ENCODE measurements at regions of chr1 and their contacts with region 1.

Region 1: DNA sequence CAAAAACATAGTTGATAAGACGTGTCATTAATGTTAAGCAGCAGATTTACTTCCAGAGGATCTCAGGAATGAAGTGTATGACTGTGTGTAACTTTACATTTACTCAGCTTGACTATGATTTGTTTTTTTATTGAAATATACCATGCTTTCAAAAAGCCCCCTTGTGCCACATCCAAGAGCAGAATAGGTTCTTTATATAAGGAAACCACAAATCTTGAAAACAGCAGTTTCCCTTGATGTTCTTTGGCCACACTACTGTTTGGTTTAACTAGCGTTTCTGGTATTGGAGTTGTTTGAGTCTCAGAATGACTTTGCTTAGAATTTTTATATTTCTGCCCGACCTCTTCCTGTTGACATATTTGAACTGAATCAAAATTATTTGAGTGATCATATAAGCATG is 25.0 kb downstream of the LRRC8C start:
- DNase-seq: no peak
- ATAC-seq: peak; percentile 34
- H3K4me3 Mint-ChIP-seq: no peak overlapping the region
- H3K27ac Mint-ChIP-seq: peak overlapping the region; percentile 27
- H3K4me1 Mint-ChIP-seq: peaks cover 54% of the 10 kb centered on the region
- H3K27me3 Mint-ChIP-seq: no peaks in the 10 kb centered on the region
- CTCF ChIP-seq: no peak

Region 2: DNA sequence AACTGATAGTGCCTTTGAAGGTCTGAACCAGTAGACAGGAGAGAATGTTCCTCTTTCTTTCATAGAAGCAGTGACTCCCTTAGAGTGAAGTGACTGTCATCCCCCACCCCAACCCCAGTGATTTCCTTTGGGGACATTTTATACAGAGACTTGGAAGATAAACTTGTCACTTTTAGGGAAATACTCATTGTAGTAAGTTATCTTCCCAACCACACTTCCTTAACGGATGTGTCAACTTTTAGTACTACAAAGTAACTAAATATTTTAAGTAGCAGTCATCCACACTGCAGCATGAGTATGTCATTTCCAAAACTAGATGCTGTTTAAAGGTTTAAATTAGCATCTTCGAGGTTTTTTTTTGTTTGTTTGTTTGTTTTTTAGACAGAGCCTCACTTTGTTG is 119.5 kb before region 1 on chr1:
- CTCF ChIA-PET with region 1: no interaction called
- POLR2A ChIA-PET with region 1: no interaction called
- intact Hi-C with region 1: no loop called
- DNase-seq: no peak
- ATAC-seq: no peak
- H3K4me3 Mint-ChIP-seq: no peak overlapping the region
- H3K27ac Mint-ChIP-seq: no peak overlapping the region
- H3K4me1 Mint-ChIP-seq: peaks cover 11% of the 10 kb centered on the region
- H3K27me3 Mint-ChIP-seq: no peaks in the 10 kb centered on the region
- CTCF ChIP-seq: no peak

Region 3: DNA sequence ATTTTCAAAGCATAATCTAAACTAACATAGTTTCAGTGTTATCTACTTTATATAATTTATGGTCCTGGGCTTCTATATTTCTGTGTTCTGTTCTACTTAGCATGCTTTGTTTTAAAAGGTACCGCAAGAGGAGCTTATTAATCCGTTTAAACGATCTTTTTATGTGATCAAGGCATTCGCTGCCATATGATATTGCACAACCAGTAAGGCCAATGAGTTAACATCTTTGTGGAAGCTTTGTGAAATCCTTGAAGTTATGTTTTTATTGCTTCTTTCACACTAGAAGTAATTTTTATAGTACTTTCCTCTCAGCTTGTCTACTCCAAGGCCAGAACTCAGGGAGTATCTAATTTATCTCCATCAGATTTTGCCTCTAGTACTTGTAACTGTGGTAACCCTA is 16.1 kb before region 1 on chr1:
- CTCF ChIA-PET with region 1: no interaction called
- POLR2A ChIA-PET with region 1: interaction called, 4 read pairs
- intact Hi-C with region 1: loop called (anchors 2 kb)
- DNase-seq: no peak
- ATAC-seq: no peak
- H3K4me3 Mint-ChIP-seq: no peak overlapping the region
- H3K27ac Mint-ChIP-seq: no peak overlapping the region
- H3K4me1 Mint-ChIP-seq: no peaks in the 10 kb centered on the region
- H3K27me3 Mint-ChIP-seq: no peaks in the 10 kb centered on the region
- CTCF ChIP-seq: no peak

Measured in activated B cell treated with CpG ODN at 0.5 μM for 24 hours (primary cell).